Activated T-helper 1 cell treated with anti-CD3 and anti-CD28 coated beads, Interleukin-12 subunit alpha, Interleukin-12 subunit beta, Interleukin-2, Interleukin-4 antibody, amounts not matched to agents 30 ng/mL and 10 ng/mL and 1 ng/mL, durations not matched to agents 14 hours and 24 hours and 36 hours (primary cell): ENCODE measurements at regions of chr1 and their contacts with region 1.

Region 1: GRCh38 chr1:100459358-100460114 is 78.4 kb upstream of the GPR88 start:
- DNase-seq: peak; percentile 55
- H3K4me3 Mint-ChIP-seq: no peak overlapping the region
- H3K27ac Mint-ChIP-seq: no peak overlapping the region
- H3K4me1 Mint-ChIP-seq: peaks cover 43% of the 10 kb centered on the region
- H3K27me3 Mint-ChIP-seq: no peaks in the 10 kb centered on the region

Region 2: GRCh38 chr1:100132566-100133477 is 326.7 kb before region 1 on chr1 and contains the starts of genes SASS6 and TRMT13:
- intact Hi-C with region 1: loop called (anchors 2 kb)
- DNase-seq: peak; percentile 93
- H3K4me3 Mint-ChIP-seq: peak within 1 kb of the TSS; percentile 99
- H3K27ac Mint-ChIP-seq: peak within 1 kb of the TSS; percentile 98
- H3K4me1 Mint-ChIP-seq: peaks cover 56% of the 10 kb centered on the region
- H3K27me3 Mint-ChIP-seq: no peaks in the 10 kb centered on the region
- total RNA-seq, gene SASS6: 16.4 and 16.7 TPM in 2 replicates
- total RNA-seq, gene TRMT13: 21.8 and 25.0 TPM in 2 replicates

Region 3: GRCh38 chr1:100265931-100266740 is 193.4 kb before region 1 on chr1 and contains the start of gene RTCA:
- intact Hi-C with region 1: loop called (anchors 2 kb)
- DNase-seq: peak; percentile 94
- H3K4me3 Mint-ChIP-seq: peak within 1 kb of the TSS; percentile 100
- H3K27ac Mint-ChIP-seq: peak within 1 kb of the TSS; percentile 100
- H3K4me1 Mint-ChIP-seq: peaks cover 50% of the 10 kb centered on the region
- H3K27me3 Mint-ChIP-seq: peaks cover 4% of the 10 kb centered on the region
- total RNA-seq, gene RTCA: 48.1 and 52.0 TPM in 2 replicates

Region 4: GRCh38 chr1:100292711-100293110 is 166.8 kb before region 1 on chr1:
- intact Hi-C with region 1: loop called (anchors 5 kb)
- DNase-seq: no peak
- H3K4me3 Mint-ChIP-seq: no peak overlapping the region
- H3K27ac Mint-ChIP-seq: no peak overlapping the region
- H3K4me1 Mint-ChIP-seq: no peaks in the 10 kb centered on the region
- H3K27me3 Mint-ChIP-seq: no peaks in the 10 kb centered on the region

Region 5: GRCh38 chr1:100443811-100444571 is 15.5 kb before region 1 on chr1:
- intact Hi-C with region 1: no loop called
- DNase-seq: peak; percentile 22
- H3K4me3 Mint-ChIP-seq: peak overlapping the region; percentile 61
- H3K27ac Mint-ChIP-seq: peak overlapping the region; percentile 95
- H3K4me1 Mint-ChIP-seq: peaks cover 91% of the 10 kb centered on the region
- H3K27me3 Mint-ChIP-seq: no peaks in the 10 kb centered on the region

Region 6: DNA sequence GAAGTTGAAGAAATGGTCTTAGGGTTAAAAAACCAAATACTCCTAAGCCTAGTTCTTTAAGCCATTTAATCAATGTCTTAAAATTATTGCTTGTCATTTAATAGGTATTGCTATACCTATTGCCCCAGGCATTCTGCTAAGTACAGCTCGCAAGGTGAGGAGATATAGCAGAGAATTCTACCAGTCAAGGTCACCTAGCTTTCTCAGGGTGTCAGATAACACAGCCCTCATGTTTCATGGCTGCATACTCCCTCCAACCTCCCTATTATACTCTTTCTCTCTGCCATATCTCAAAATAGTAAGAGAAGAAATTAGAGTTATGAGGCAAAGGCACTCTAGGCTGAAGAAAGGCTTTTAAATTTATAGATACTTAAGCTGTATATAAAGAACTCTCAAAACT is 10.0 kb after region 1 on chr1:
- intact Hi-C with region 1: no loop called
- DNase-seq: no peak
- H3K4me3 Mint-ChIP-seq: no peak overlapping the region
- H3K27ac Mint-ChIP-seq: no peak overlapping the region
- H3K4me1 Mint-ChIP-seq: peaks cover 5% of the 10 kb centered on the region
- H3K27me3 Mint-ChIP-seq: no peaks in the 10 kb centered on the region

Region 7: GRCh38 chr1:100530880-100531487 is 71.4 kb after region 1 on chr1:
- intact Hi-C with region 1: loop called (anchors 5 kb)
- DNase-seq: no peak
- H3K4me3 Mint-ChIP-seq: no peak overlapping the region
- H3K27ac Mint-ChIP-seq: peak overlapping the region; percentile 33
- H3K4me1 Mint-ChIP-seq: peaks cover 28% of the 10 kb centered on the region
- H3K27me3 Mint-ChIP-seq: peaks cover 19% of the 10 kb centered on the region

Region 8: GRCh38 chr1:100710906-100711682 is 251.6 kb after region 1 on chr1:
- intact Hi-C with region 1: no loop called
- DNase-seq: no peak
- H3K4me3 Mint-ChIP-seq: no peak overlapping the region
- H3K27ac Mint-ChIP-seq: no peak overlapping the region
- H3K4me1 Mint-ChIP-seq: peaks cover 15% of the 10 kb centered on the region
- H3K27me3 Mint-ChIP-seq: peaks cover 2% of the 10 kb centered on the region